Heart right ventricle (tissue), 16 donors: ENCODE measurements at regions of chr9 and their contacts with region 1.

Region 1: DNA sequence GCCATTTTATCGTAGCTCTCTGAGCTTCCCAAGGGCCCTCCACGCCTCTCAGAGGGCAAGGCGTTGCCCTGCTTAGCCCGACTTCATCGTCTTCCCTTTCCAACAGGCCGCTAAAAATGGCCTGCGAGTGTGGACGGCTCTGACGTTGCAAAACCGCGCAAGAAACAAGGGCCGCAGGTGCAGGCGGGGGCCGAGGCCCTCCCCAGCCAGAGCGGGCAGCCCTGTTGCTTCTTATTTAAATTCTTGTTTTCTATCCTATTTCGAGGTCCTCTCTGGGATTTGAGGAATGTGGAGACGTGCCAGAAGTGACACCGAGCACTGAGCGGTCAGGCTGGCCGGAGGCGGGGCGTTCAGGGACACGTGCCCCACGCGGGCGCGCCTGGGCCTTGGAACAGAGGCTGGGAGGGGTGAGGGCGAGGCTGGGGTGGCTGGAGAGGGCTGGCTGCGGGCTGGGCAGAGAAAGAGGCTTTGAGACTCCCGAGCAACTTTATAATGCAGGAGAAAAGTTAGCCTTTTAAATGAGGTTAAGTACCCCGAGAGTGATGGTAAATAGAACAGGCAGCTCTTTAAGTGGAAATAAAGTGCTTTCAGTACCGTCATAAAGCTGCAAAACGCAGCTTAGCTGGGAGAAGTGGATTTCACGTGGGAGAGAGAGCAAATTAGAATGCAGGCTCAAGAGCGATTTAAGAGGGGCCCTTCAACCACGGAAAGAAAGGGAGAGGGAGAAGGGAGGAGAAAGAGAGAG is 243.6 kb downstream of the AUH start:
- DNase-seq: peak; percentile 87
- ATAC-seq: peak; percentile 96 to 99 (median 98)
- H3K4me3 ChIP-seq: peak overlapping the region in 9 of 10 donors; percentile 22 to 49 (median 41)
- H3K27ac ChIP-seq: peak overlapping the region in 9 of 10 donors; percentile 47 to 86 (median 69)
- H3K4me1 ChIP-seq: peaks cover 11 to 45% (median 26%) of the 10 kb centered on the region in 9 donors
- H3K27me3 ChIP-seq: no peaks in the 10 kb centered on the region
- CTCF ChIP-seq: no peak

Region 2: DNA sequence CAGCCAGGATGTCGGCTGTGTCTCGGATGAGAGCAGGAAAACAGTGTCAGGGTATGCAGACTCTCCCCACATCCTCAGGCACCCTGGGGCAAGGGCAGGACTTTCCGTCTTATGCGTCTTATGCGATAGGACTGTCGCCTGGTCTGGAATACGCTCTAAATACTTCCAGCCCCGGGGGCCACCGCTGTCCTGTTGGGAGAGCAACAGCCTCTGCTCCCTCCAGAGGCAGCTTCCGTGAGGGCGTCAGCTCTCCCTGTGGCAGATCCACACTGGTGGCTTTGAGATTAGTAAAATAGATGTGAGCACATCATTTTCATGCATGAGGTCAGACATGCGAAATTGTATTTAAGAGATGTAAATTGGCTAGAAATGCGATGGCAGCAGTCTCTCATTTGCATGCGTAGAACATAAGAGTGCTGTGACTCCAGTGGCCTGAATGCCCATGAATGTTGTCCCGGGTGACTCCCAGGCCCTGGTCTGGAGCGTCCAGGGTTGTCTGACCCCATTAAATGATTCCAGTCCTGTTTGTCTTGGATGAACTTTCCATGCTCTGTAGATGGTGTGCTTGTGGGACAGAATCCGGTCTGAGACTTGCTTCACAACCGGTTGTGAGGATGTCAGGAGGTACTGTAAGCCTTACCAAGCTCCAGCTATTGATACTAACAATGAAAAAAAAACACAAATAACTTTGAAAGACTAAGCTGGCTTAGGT is 88.3 kb before region 1 on chr9:
- intact Hi-C with region 1: no loop called
- DNase-seq: no peak
- ATAC-seq: no peak
- H3K4me3 ChIP-seq: no peak overlapping the region
- H3K27ac ChIP-seq: no peak overlapping the region
- H3K4me1 ChIP-seq: no peaks in the 10 kb centered on the region
- H3K27me3 ChIP-seq: peaks cover 0 to 16% (median 0%) of the 10 kb centered on the region in 7 donors
- CTCF ChIP-seq: no peak

Region 3: DNA sequence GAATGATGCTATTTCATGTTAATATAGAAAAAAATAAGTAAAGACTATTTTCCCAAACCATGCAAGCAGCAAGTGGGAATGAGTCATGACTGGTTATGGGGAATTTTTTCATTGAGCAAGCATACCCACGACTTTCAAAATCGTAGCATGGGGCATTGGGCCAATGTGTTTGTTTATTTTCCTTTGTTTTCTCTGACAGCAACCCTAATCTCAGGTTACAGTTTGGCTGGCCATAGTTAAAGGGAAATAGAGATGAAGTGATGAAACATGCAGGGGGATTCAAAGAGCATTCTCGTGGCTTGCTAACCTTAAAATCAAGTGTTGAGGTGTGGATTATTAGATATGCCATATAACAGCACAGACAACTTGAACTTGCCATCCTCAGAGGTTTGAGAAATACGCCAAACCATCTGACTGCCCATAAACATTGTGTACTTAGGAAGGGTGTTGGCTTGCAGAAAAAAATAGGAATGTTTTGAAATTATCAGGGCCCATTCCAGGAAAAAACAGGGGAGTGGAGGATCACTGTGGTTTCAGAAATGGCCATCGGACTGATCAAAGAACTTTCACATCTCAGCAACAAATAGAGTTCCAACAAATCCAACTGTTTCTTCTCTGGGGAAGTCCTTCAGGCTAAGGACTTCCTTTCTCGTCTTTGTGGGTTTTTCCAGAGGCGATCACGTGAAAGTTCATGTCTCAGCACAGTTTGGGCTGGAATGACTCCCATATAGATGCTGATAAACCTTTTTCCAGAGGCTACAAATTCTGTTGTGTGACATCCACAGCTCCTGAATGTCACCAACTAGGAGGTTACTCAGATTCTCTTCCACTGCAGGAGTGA is 57.4 kb before region 1 on chr9:
- intact Hi-C with region 1: loop called in 1 of 10 experiments (anchors 10 kb)
- DNase-seq: peak in 1 of 2 donors; percentile 25
- ATAC-seq: peak; percentile 38 to 72 (median 65)
- H3K4me3 ChIP-seq: no peak overlapping the region
- H3K27ac ChIP-seq: peak overlapping the region in 7 of 10 donors; percentile 3 to 53 (median 37)
- H3K4me1 ChIP-seq: peaks cover 2 to 34% (median 15%) of the 10 kb centered on the region in 9 donors
- H3K27me3 ChIP-seq: no peaks in the 10 kb centered on the region
- CTCF ChIP-seq: no peak